Activated CD4-positive, alpha-beta T cell treated with anti-CD3 and anti-CD28 coated beads for 36 hours (primary cell): ENCODE measurements at regions of chr19 and their contacts with region 1.

Region 1: DNA sequence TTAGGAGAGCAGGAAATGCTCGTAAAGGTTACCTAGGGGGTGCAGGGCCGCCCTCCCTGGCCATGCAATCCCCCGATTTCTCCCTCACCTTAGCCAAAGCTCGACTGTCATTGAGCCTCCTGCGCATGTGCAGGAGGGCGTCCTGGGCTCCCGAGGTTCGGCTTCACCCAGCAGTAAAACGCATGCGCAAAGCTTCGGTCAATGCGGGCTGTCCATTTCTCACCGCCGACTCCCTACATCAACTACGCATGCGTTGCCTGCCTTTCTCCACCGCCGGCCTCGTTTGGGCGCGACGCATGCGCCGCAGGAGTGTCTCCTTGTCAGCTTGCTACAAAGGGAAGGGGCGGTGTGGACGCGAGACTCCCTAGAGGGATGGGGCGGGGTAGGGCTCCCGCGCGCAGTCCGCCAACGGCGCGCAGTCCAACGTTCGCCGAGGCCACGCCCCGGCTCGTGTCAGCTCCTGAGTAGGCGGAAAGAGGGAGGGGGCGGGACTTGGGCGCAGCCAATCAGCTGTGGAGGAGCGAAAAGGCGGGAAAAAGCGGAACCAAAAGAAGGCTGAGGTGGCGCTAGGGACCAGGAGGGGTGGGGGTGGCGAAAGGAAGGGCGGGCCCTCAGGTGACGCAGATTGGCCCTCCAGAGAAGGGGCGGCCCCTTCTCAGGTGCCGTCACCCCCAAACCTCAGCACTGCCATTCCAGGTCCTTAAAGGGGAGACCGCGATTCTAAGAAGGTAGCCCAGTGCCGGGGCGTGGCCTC is at the starts of genes SYNGR4 and TMEM143:
- DNase-seq: peak; percentile 99
- ATAC-seq: peak; percentile 90
- H3K4me3 Mint-ChIP-seq: peak within 1 kb of the TSS; percentile 84
- H3K27ac Mint-ChIP-seq: peak within 1 kb of the TSS; percentile 95
- H3K4me1 Mint-ChIP-seq: peaks cover 13% of the 10 kb centered on the region
- H3K27me3 Mint-ChIP-seq: no peaks in the 10 kb centered on the region
- total RNA-seq, gene SYNGR4: 0.25 TPM in 1 of 2 experiments, not detected in the other
- total RNA-seq, gene TMEM143: 18.9 to 21.5 TPM

Region 2: DNA sequence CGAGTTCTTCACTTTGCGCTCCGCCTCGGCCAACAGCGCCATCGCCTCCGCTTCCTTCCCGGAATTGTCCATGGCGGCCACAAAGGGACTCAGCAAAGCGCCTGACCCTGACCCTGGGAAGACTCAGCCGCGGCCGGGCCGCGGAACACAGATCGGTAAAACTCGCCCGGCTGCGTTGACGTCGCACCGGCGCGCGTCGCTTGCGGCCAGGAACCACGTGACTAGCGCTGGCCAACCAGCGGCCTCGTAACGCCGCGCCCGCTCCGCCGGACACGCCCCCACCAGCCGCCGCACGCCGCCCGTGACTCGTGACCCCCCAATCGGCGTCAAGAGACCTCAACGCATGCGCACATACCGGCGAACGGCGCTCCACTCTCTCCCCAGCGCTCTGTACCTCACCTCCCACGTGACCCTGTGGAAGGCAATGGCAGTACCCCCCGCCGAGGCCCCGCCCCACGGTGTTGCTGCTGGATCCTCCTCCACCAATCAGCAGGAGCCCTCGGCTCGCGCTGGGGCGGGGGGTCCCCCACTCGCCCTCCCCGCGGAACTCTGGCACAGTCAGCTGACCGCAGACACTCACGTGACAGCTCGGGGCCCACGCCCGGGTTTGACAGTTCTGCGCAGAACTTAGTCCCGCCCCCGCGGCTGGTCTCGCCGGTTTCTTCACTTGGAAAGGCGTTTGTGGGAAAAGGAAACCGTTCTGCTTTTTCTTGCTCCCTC is 849.0 kb before region 1 on chr19 and contains the start of gene NAPA:
- CTCF ChIA-PET with region 1: no interaction called
- POLR2A ChIA-PET with region 1: no interaction called
- intact Hi-C with region 1: loop called in 1 of 2 experiments (anchors 10 kb)
- DNase-seq: peak; percentile 100
- ATAC-seq: peak; percentile 98
- H3K4me3 Mint-ChIP-seq: peak within 1 kb of the TSS; percentile 95
- H3K27ac Mint-ChIP-seq: peak within 1 kb of the TSS; percentile 99
- H3K4me1 Mint-ChIP-seq: peaks cover 76% of the 10 kb centered on the region
- H3K27me3 Mint-ChIP-seq: no peaks in the 10 kb centered on the region
- total RNA-seq, gene NAPA: 54.2 to 68.8 TPM

Region 3: GRCh38 chr19:48033604-48034003 is 330.4 kb before region 1 on chr19:
- CTCF ChIA-PET with region 1: no interaction called
- POLR2A ChIA-PET with region 1: no interaction called
- intact Hi-C with region 1: no loop called
- DNase-seq: no peak
- ATAC-seq: no peak
- H3K4me3 Mint-ChIP-seq: no peak overlapping the region
- H3K27ac Mint-ChIP-seq: no peak overlapping the region
- H3K4me1 Mint-ChIP-seq: no peaks in the 10 kb centered on the region
- H3K27me3 Mint-ChIP-seq: peaks cover 29% of the 10 kb centered on the region

Region 4: GRCh38 chr19:48255376-48256303 is 108.3 kb before region 1 on chr19 and contains the start of gene CARD8:
- CTCF ChIA-PET with region 1: no interaction called
- POLR2A ChIA-PET with region 1: no interaction called
- intact Hi-C with region 1: loop called in 1 of 2 experiments (anchors 5 kb)
- DNase-seq: peak; percentile 89
- ATAC-seq: peak; percentile 89
- H3K4me3 Mint-ChIP-seq: peak within 1 kb of the TSS; percentile 92
- H3K27ac Mint-ChIP-seq: peak within 1 kb of the TSS; percentile 98
- H3K4me1 Mint-ChIP-seq: peaks cover 63% of the 10 kb centered on the region
- H3K27me3 Mint-ChIP-seq: no peaks in the 10 kb centered on the region
- total RNA-seq, gene CARD8: 109 to 118 TPM

Region 5: DNA sequence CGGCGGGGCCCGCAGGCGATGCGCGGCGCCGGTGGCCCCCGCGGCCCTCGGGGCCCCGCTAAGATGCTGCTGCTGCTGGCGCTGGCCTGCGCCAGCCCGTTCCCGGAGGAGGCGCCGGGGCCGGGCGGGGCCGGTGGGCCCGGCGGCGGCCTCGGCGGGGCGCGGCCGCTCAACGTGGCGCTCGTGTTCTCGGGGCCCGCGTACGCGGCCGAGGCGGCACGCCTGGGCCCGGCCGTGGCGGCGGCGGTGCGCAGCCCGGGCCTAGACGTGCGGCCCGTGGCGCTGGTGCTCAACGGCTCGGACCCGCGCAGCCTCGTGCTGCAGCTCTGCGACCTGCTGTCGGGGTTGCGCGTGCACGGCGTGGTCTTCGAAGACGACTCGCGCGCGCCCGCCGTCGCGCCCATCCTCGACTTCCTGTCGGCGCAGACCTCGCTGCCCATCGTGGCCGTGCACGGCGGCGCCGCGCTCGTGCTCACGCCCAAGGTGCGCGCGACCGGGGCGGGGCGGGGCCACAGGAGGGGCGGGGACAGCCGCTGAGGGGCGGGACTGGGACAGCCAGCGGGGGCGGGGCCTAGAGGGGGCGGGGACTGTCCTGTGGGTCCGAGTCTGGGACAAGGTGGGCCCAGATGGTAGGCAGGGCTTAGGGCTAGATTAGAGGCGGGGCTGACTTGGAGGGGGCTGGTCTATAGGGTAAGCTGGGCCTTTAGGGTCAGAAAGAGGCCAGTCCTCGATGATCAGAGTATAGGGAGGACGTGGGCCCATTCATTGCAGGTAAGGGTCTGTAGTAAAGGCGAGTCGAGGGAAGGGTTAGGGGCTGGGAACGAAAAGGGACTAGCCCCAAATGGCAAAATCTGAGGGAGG is 34.6 kb after region 1 on chr19:
- CTCF ChIA-PET with region 1: interaction called, 3 read pairs
- POLR2A ChIA-PET with region 1: no interaction called
- intact Hi-C with region 1: loop called in 1 of 2 experiments (anchors 1 kb)
- DNase-seq: peak; percentile 94
- ATAC-seq: peak; percentile 68
- H3K4me3 Mint-ChIP-seq: peak overlapping the region; percentile 83
- H3K27ac Mint-ChIP-seq: no peak overlapping the region
- H3K4me1 Mint-ChIP-seq: peaks cover 29% of the 10 kb centered on the region
- H3K27me3 Mint-ChIP-seq: peaks cover 31% of the 10 kb centered on the region

Region 6: DNA sequence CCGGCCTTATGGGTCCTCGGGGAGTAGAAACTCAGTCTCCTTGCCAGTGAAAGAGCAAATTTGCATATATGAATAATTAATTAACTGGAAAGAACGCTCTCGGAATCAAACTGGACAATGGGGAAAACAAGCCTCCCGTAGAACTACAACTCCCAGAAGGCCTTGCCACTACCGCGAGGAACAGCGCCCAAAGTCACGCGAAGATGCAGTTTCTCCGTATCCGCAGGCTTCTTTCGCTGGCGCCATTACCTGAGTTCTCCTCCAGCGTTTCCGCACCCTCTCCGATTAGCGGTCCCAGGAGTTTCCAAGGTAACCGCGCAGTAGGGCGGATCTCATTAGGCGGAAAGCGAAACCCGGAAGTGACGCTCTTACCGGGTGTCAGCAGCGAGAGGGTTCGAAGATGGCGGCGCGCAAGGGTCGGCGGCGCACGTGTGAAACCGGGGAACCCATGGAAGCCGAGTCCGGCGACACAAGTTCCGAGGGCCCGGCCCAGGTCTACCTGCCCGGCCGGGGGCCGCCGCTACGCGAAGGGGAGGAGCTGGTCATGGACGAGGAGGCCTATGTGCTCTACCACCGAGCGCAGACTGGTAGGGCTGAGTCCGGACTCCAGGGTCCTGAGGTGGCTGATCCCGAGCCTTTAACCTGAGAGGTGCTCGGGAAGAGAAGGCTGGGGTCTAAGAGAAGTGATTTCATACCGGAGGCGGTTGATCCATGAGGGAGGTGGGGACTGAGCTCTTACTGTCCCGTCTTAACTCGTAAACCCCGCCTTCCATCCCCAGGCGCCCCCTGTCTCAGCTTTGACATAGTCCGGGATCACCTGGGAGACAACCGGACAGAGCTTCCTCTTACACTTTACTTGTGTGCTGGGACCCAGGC is 81.9 kb after region 1 on chr19 and contains the start of gene GRWD1:
- CTCF ChIA-PET with region 1: no interaction called
- POLR2A ChIA-PET with region 1: no interaction called
- intact Hi-C with region 1: loop called (anchors 1 kb)
- DNase-seq: peak; percentile 97
- ATAC-seq: peak; percentile 98
- H3K4me3 Mint-ChIP-seq: peak within 1 kb of the TSS; percentile 86
- H3K27ac Mint-ChIP-seq: peak within 1 kb of the TSS; percentile 89
- H3K4me1 Mint-ChIP-seq: peaks cover 37% of the 10 kb centered on the region
- H3K27me3 Mint-ChIP-seq: peaks cover 20% of the 10 kb centered on the region
- total RNA-seq, gene GRWD1: 43.4 to 51.3 TPM

Region 7: DNA sequence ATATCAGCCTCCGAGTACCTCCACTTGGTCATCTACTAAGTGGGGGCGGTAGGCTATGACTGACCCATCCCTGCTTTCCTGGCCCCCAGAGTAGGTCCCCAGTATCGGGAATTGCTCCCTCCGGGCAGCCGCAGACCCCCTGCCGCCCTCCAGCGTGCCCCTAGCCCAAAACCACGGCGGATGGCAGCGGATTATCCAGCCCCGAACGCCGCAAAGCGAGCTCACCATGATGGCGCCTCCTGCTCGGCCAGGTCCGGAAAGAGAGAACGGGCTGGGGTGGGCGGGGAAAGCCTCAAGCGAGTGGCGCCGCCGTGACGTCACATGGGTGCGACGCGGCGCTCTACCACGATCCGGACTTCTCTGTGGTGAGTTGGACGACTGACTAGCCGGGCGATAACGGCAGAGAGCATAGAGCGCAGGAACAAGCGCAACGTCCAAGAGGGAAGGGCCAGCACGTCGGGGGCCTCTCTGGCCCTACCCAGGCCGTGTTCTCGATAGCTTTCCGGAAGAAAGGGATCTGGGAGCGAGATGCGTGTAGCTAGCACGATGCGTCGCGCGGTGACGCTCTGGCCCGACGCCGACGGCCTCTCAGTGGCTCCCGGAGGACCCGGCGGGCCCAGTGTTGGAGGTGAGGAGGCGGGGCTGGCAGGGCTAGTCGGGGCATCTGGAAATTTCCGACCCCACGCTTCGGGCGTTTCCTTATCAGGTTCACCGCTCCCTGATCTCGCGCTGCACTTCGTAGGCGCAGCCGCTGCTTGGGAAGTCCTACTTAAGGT is 255.1 kb after region 1 on chr19 and contains the starts of genes RPL18 and SPHK2:
- CTCF ChIA-PET with region 1: no interaction called
- POLR2A ChIA-PET with region 1: interaction called, 8 read pairs
- intact Hi-C with region 1: loop called in 1 of 2 experiments (anchors 1 kb)
- DNase-seq: peak; percentile 97
- ATAC-seq: peak; percentile 82
- H3K4me3 Mint-ChIP-seq: peak within 1 kb of the TSS; percentile 94
- H3K27ac Mint-ChIP-seq: peak within 1 kb of the TSS; percentile 97
- H3K4me1 Mint-ChIP-seq: peaks cover 48% of the 10 kb centered on the region
- H3K27me3 Mint-ChIP-seq: no peaks in the 10 kb centered on the region
- total RNA-seq, gene RPL18: 2,026 to 2,191 TPM
- total RNA-seq, gene SPHK2: 27.0 TPM

Region 8: GRCh38 chr19:48720613-48721296 is 356.8 kb after region 1 on chr19:
- CTCF ChIA-PET with region 1: no interaction called
- POLR2A ChIA-PET with region 1: no interaction called
- intact Hi-C with region 1: loop called in 1 of 2 experiments (anchors 1 kb)
- DNase-seq: peak; percentile 97
- ATAC-seq: peak; percentile 96
- H3K4me3 Mint-ChIP-seq: peak overlapping the region; percentile 80
- H3K27ac Mint-ChIP-seq: peak overlapping the region; percentile 97
- H3K4me1 Mint-ChIP-seq: peaks cover 14% of the 10 kb centered on the region
- H3K27me3 Mint-ChIP-seq: no peaks in the 10 kb centered on the region